ENCODE measurements at regions of chr12 and their contacts with region 1.

Region 1: DNA sequence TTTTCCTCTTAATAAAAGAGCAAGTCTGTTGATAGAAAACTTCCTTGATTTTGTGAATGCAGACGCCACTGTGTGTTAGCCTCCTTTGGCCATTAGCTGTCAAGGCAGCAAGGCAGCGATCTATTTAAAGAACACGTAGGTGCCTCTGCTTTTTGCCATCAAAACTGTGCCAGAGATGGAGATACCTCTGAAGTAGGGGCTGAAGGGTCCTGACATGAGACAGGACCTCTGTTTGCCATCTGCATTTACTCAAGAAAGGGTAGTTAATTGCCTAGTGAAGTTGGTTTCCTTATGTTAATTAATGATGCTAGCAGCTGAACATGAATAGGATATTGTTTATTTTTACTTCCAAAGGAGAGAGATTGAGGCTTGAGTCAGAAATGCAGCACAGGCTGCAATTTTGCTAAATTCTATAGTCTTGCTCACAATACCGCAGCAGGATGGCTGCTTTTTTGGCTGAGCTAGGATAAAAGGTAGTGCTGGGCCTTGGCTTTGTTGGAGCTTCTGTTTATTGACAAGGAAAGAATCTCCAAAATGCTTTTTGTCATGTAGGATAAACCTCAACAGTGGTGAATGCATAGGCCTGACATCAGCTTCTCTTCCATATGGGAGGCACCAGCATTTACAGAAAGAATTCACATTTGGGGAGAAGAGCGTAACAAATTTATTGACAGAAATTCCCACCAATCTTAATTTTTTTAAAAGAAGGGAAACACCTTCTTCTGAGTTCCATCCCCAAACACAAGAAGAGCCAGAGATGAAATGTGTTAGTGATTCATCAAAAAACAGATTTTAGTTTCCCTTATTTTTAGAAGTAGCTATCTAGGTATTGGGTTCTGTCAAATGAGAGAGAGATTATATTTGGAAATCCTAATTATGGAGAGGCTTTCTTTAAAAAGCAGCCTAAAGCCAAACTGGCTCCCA is 13.9 kb upstream of the RPH3A start:
- DNase-seq: no peak
- ATAC-seq: peak; percentile 92
- H3K4me3 Mint-ChIP-seq: peak overlapping the region; percentile 17; the same call in 1 of the 2 replicates
- H3K27ac Mint-ChIP-seq: peak overlapping the region; percentile 83
- H3K4me1 Mint-ChIP-seq: peaks cover 42% of the 10 kb centered on the region
- H3K27me3 Mint-ChIP-seq: peaks cover 32% of the 10 kb centered on the region
- CTCF ChIP-seq: no peak

Region 2: GRCh38 chr12:112788205-112788604 is 10.6 kb after region 1 on chr12:
- CTCF ChIA-PET with region 1: interaction called, 10 read pairs
- POLR2A ChIA-PET with region 1: interaction called, 3 read pairs
- DNase-seq: peak; percentile 34
- ATAC-seq: peak; percentile 62
- H3K4me3 Mint-ChIP-seq: no peak overlapping the region
- H3K27ac Mint-ChIP-seq: no peak overlapping the region
- H3K4me1 Mint-ChIP-seq: peaks cover 21% of the 10 kb centered on the region
- H3K27me3 Mint-ChIP-seq: peaks cover 31% of the 10 kb centered on the region
- CTCF ChIP-seq: 0 out of 2 replicates have a peak, but pooled peaks have one; percentile 31

Region 3: GRCh38 chr12:112848972-112849371 is 71.3 kb after region 1 on chr12:
- CTCF ChIA-PET with region 1: no interaction called
- POLR2A ChIA-PET with region 1: no interaction called
- DNase-seq: no peak
- ATAC-seq: no peak
- H3K4me3 Mint-ChIP-seq: no peak overlapping the region
- H3K27ac Mint-ChIP-seq: no peak overlapping the region
- H3K4me1 Mint-ChIP-seq: peaks cover 19% of the 10 kb centered on the region
- H3K27me3 Mint-ChIP-seq: peaks cover 9% of the 10 kb centered on the region
- CTCF ChIP-seq: no peak

Measured in WTC11 (cell line).